ENCODE measurements at regions of chr7 and their contacts with region 1.

Region 1: DNA sequence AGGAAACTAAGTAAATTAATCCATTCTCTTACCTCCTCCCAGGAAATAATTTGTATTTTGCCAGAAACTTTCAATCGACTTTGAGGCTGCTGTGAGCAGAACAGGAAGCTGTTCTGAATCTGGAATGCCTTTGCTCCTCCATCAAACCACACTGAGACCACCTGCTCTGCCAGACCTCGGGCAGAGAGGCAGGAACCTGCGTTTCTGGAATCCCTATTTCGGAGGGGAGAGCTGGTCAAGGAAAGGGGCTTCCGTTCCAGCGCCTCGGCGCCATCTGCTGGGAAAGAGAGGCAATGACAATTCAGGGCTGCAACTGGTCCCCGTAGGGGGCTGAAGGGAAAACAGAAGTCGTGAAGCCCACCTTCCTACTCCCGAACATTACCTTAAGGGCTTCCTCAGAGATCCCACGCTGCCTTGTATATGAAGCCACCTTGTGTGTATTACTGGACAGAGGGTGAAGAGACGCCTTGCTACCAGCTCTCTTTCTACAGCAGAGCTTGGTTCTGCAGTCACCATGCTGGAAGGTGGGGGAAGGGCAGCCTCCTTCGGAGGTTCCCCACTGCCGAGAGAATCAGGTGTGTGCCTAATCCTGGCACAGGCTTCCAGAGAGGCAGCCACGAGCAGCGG is 31.2 kb downstream of the ZNF467 start:
- DNase-seq: peak in 1 of 2 donors; percentile 80
- H3K4me3 ChIP-seq: peak overlapping the region; percentile 38 to 55
- H3K27ac ChIP-seq: no peak overlapping the region
- H3K4me1 ChIP-seq: peaks cover 0 to 9% of the 10 kb centered on the region in 2 donors
- H3K27me3 ChIP-seq: no peaks in the 10 kb centered on the region
- CTCF ChIP-seq: peak; percentile 44 to 95 (median 91)

Region 2: GRCh38 chr7:149586646-149587332 is 155.4 kb before region 1 on chr7:
- intact Hi-C with region 1: no loop called
- DNase-seq: no peak
- H3K4me3 ChIP-seq: no peak overlapping the region
- H3K27ac ChIP-seq: no peak overlapping the region
- H3K4me1 ChIP-seq: no peaks in the 10 kb centered on the region
- H3K27me3 ChIP-seq: no peaks in the 10 kb centered on the region
- CTCF ChIP-seq: no peak

Region 3: DNA sequence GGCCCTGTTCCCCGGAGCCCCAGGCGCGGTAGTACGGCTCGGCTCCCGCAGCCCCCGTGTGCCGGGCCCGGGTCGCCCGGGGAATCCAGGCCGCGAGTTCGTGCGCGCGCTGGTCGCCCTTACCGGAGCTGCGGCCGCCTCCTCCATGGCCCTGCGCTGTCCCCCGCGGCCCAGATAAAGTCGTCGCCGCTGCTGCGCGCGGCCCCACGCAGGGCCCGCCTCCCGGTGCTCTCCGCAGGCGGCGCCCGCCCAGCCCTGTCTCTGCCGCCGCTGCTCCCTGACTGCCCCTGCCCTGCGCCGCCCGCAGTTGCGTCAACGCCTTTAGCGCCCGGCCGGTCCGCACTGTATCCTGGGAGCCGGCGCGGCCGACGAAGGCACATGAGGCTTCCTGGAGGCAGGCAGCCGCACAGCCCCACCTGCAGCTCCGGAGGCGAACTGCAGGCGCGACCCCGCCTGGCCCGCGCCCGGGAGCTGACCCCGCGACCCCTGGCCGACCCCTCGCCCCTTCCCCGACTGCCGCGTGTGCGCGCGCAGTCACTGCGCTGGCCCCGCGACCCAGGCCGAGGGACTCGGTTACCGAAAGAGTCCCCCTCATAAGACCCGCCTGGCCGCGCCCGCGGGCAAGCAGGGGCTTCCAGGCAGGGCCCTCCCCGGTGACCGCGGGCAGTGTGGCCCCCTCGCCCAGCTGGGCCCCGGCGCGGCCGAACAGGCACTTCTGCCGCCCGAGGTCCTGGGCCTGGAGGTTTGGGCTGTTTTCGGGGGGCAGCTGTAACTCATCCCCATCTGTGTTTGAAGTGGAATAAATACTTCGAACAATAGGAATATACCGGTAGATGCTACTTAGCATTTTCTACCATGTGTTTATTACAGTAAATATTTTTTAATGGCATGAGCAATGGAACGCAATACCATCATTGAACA is 117.5 kb before region 1 on chr7:
- intact Hi-C with region 1: loop called (anchors 10 kb)
- DNase-seq: peak; percentile 77 to 97
- H3K4me3 ChIP-seq: peak overlapping the region; percentile 91 to 98
- H3K27ac ChIP-seq: peak overlapping the region; percentile 84 to 90
- H3K4me1 ChIP-seq: peaks cover 0 to 7% of the 10 kb centered on the region in 2 donors
- H3K27me3 ChIP-seq: no peaks in the 10 kb centered on the region
- CTCF ChIP-seq: peak; percentile 92 to 98 (median 93)

Region 4: DNA sequence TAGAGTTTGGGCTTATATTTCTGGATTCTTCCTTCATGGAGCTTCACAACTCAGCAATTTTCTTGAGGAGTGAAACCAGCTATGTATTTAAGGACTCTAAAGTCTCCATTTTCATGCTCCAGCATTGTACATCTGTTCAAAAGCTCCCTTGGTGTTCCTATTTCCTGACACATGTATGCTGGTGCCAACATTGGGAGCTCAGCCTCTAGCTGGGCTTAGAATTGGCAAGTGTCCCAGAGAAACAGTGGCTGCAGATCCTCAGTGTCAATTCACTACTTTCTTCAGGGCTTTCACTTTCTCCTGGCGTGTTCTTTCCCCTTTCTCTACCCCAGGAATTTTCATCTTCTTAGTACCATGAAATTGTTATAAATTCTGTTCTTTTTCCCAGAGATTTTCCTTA is 71.9 kb before region 1 on chr7:
- intact Hi-C with region 1: loop called (anchors 2 kb)
- DNase-seq: no peak
- H3K4me3 ChIP-seq: no peak overlapping the region
- H3K27ac ChIP-seq: no peak overlapping the region
- H3K4me1 ChIP-seq: peaks cover 0 to 11% of the 10 kb centered on the region in 2 donors
- H3K27me3 ChIP-seq: no peaks in the 10 kb centered on the region
- CTCF ChIP-seq: no peak

Region 5: DNA sequence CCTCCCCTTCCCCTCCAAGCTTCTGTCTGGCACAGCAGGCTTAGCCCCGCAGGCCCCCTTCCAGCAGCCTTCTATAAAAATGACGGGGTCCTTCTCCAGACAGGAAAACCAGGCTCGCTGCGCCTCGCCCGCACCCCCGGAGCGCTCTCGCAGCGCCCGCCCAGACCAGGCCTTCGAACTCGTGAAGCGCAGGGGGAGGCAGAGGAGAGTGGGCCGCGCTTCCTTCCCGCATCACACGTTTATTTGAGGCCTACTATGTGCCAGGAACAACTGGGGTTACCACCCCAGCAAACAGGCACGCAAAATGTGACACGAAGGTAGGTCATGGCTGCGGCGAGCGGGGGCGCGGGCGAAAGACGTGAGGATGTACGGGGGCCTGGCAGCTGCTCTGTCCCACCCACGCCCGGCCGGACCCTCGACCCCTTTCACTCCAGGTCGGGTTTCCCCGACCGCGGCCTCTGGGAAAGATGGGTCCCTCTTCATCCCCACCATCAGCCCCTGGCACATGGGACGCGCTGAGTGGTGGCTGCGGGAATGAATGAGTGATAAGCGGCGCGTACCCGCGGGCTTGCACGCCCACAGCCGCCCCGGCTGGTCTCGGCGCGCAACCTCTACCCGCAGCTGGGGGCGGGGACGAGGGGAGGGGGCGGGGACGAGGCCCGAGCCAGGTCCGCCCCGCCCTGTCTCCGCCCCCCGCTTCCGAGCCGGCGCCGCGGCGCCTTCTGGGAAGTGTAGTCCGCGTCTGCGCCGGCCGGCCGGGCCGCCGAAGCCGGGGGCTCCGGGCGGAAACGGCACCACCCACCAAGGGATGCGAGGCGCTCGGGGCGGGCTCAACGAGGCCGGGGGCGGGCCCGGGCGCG is 27.9 kb before region 1 on chr7:
- intact Hi-C with region 1: no loop called
- DNase-seq: peak; percentile 47 to 93
- H3K4me3 ChIP-seq: peak overlapping the region; percentile 69 to 86
- H3K27ac ChIP-seq: peak overlapping the region; percentile 29 to 83
- H3K4me1 ChIP-seq: peaks cover 3 to 20% of the 10 kb centered on the region in 2 donors
- H3K27me3 ChIP-seq: no peaks in the 10 kb centered on the region
- CTCF ChIP-seq: no peak